ENCODE measurements at regions of chr9 and their contacts with region 1.

Region 1: DNA sequence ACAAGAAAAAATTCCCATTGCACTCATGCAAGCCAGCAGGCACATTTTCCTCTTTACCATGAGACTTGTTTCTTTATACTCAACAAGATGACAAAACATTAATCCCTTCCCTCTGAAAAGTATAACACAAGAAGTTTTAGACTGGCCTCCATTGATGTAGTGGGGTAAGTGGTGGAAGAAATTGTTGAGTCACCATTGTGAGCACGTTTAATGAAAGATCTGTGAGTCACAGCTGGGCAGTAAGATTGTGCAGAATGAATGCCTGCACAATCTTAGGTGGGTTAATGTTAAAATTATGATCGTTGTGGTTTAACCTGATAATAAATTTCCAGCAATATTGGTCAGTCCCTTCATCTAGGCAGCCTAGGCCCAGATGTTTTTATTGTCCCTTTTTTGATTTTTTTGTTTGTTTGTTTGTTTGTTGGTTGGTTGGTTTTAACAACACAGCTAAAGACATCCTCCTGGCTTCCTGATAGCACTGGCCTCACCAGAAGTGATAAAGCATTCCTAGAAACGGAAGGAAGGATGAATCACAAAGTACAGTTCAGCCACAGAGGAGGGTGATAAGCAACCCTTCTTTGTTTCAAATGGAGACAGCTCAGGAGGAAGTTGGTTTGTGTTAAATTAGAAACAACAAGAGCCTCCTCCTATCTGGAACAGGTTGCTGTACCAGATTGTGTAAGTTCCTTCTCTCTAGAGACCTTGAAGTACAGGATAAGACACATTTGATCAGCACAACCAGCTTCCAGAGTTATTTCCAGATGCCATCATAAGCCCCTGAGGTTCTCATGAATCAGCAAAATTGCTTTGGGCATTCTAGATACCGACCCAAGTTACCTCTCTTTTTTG is 40.3 kb downstream of the SLC24A2 start:
- DNase-seq: peak; percentile 48
- H3K4me3 ChIP-seq: no peak overlapping the region
- H3K27ac ChIP-seq: no peak overlapping the region
- H3K4me1 ChIP-seq: peaks cover 19% of the 10 kb centered on the region
- H3K27me3 ChIP-seq: no peaks in the 10 kb centered on the region
- CTCF ChIP-seq: no peak

Region 2: GRCh38 chr9:19689328-19690101 is 59.0 kb before region 1 on chr9:
- CTCF ChIA-PET with region 1: no interaction called
- dilution Hi-C with region 1: no loop called
- in situ Hi-C with region 1: no loop called
- intact Hi-C with region 1: loop called (anchors 10 kb)
- DNase-seq: peak; percentile 9
- H3K4me3 ChIP-seq: no peak overlapping the region
- H3K27ac ChIP-seq: no peak overlapping the region
- H3K4me1 ChIP-seq: peaks cover 17% of the 10 kb centered on the region
- H3K27me3 ChIP-seq: no peaks in the 10 kb centered on the region
- CTCF ChIP-seq: no peak